Gastrocnemius medialis (tissue), 4 donors: ENCODE measurements at regions of chr5 and their contacts with region 1.

Region 1: GRCh38 chr5:79508354-79508753 is 5.6 kb downstream of the HOMER1 start:
- DNase-seq: no peak
- ATAC-seq: peak; percentile 42 to 64
- H3K4me3 ChIP-seq: peak overlapping the region in 3 of 4 donors; percentile 7 to 16 (median 16)
- H3K27ac ChIP-seq: peak overlapping the region; percentile 93 to 97 (median 96)
- H3K4me1 ChIP-seq: peaks cover 30 to 40% of the 10 kb centered on the region in 2 donors
- H3K27me3 ChIP-seq: no peaks in the 10 kb centered on the region
- CTCF ChIP-seq: no peak
- POLR2A ChIP-seq: no peak

Region 2: DNA sequence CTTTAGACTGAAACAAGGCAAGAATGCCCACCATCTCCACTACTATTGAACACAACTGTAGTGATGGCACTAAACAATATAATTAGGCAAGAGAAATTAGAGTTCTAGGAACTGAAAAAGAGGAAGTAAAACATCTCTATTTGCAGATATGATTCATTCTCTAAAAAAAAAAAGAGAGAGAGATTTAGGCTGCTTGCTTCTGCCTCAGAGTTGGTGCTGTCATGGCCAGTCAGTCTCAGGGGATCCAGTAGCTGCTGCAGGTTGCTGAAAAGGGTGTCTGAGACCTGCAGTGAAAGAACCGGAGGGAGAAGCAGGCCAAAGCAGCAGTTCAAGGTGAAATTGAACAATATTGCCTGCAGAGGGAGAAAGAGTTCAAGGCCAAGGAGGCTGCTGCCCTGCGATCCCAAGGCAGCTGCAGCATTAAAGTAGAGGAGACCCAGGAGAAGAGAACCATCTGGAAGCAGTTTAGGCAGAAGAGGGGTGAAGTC is 1286.3 kb before region 1 on chr5:
- in situ Hi-C with region 1: no loop called
- intact Hi-C with region 1: no loop called
- DNase-seq: no peak
- ATAC-seq: no peak
- H3K4me3 ChIP-seq: no peak overlapping the region
- H3K27ac ChIP-seq: no peak overlapping the region
- H3K4me1 ChIP-seq: no peaks in the 10 kb centered on the region
- H3K27me3 ChIP-seq: no peaks in the 10 kb centered on the region
- CTCF ChIP-seq: no peak
- POLR2A ChIP-seq: no peak

Region 3: GRCh38 chr5:78930721-78931120 is 577.6 kb before region 1 on chr5:
- in situ Hi-C with region 1: no loop called
- intact Hi-C with region 1: no loop called
- DNase-seq: no peak
- ATAC-seq: no peak
- H3K4me3 ChIP-seq: no peak overlapping the region
- H3K27ac ChIP-seq: no peak overlapping the region
- H3K4me1 ChIP-seq: no peaks in the 10 kb centered on the region
- H3K27me3 ChIP-seq: no peaks in the 10 kb centered on the region
- CTCF ChIP-seq: no peak
- POLR2A ChIP-seq: no peak

Region 4: GRCh38 chr5:79529110-79529509 is 20.8 kb after region 1 on chr5:
- in situ Hi-C with region 1: no loop called
- intact Hi-C with region 1: no loop called
- DNase-seq: no peak
- ATAC-seq: no peak
- H3K4me3 ChIP-seq: no peak overlapping the region
- H3K27ac ChIP-seq: peak overlapping the region in 1 of 4 donors; percentile 14
- H3K4me1 ChIP-seq: peaks cover 7 to 10% of the 10 kb centered on the region in 2 donors
- H3K27me3 ChIP-seq: no peaks in the 10 kb centered on the region
- CTCF ChIP-seq: no peak
- POLR2A ChIP-seq: no peak

Region 5: GRCh38 chr5:79811081-79811480 is 302.7 kb after region 1 on chr5:
- in situ Hi-C with region 1: no loop called
- intact Hi-C with region 1: loop called (anchors 5 kb)
- DNase-seq: no peak
- ATAC-seq: no peak
- H3K4me3 ChIP-seq: no peak overlapping the region
- H3K27ac ChIP-seq: peak overlapping the region; percentile 34 to 75 (median 66)
- H3K4me1 ChIP-seq: peaks cover 52 to 53% of the 10 kb centered on the region in 2 donors
- H3K27me3 ChIP-seq: no peaks in the 10 kb centered on the region
- CTCF ChIP-seq: no peak
- POLR2A ChIP-seq: no peak

Region 6: DNA sequence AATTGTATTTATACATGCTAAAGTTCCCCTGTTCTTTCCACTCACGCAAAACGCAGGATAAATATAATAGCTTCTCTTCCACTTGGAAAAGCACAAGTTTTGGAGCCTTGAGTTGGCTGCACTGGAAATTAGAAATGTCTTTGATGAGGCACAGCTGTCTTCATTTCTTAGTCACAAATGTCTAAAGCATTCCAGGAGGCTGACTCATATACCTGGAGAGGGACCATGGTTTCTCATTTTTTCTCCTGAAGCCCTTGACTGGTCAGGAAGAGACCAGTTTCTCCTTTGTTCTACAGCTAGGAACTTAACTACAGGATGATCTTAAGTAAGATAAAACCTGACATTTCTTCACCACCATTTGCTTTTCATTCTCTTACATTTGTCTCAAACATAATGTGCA is 466.5 kb after region 1 on chr5:
- in situ Hi-C with region 1: no loop called
- intact Hi-C with region 1: no loop called
- DNase-seq: no peak
- ATAC-seq: peak in 1 of 2 donors; percentile 49
- H3K4me3 ChIP-seq: no peak overlapping the region
- H3K27ac ChIP-seq: no peak overlapping the region
- H3K4me1 ChIP-seq: no peaks in the 10 kb centered on the region
- H3K27me3 ChIP-seq: no peaks in the 10 kb centered on the region
- CTCF ChIP-seq: no peak
- POLR2A ChIP-seq: no peak